ENCODE measurements at regions of chr10 and their contacts with region 1.

Region 1: DNA sequence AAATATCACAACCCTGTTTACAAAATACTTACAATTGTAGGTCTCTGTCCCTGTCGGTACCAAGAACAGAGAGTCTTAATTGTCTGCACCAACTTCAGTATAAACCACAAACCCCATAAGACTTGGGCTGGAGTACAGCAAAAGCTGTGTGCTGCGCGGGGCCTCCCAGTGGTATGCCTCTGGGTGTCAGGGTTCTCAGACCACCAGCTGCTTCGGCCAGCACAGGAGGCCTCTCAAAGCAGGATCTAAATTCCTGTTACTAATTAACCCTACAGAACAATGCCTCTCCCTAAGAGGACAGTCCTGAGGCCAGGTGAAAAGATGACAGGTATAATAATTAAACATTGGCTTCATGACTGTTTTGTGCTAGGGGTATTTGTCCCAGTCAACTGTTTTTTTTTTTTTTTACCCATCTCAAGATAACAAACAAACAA is 957 bp upstream of the SVIL start:
- DNase-seq: peak; percentile 57
- H3K4me3 ChIP-seq: no peak overlapping the region
- H3K27ac ChIP-seq: peak overlapping the region; percentile 93
- H3K4me1 ChIP-seq: peaks cover 37% of the 10 kb centered on the region
- H3K27me3 ChIP-seq: no peaks in the 10 kb centered on the region
- CTCF ChIP-seq: no peak
- POLR2A ChIP-seq: no peak

Region 2: DNA sequence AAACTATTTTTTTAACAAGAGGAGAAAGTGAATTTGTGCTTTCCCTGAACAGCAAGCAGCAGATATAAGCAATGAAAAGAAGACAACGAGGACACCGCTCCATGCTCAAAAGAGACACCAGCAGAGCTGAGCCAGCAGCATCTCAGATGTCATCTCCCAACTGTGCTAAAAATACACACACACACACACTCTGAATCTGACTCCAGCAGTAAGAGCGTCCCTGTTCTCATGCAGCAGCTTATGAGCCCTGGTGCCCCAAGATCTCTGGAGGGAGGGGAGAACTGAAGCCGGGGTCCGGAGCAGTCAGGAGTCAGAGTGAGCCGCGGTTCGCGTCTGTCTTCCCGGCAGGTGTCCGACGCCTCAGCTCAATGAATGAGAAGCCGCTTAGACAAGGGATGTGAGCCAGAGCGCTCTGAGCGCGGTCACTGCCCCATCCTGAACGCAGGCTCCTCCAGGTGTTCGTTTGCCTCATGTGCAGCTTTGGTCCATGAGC is 50.2 kb before region 1 on chr10:
- CTCF ChIA-PET with region 1: no interaction called
- POLR2A ChIA-PET with region 1: no interaction called
- dilution Hi-C with region 1: no loop called
- intact Hi-C with region 1: no loop called
- DNase-seq: peak; percentile 60
- H3K4me3 ChIP-seq: no peak overlapping the region
- H3K27ac ChIP-seq: peak overlapping the region; percentile 32
- H3K4me1 ChIP-seq: peaks cover 26% of the 10 kb centered on the region
- H3K27me3 ChIP-seq: no peaks in the 10 kb centered on the region
- CTCF ChIP-seq: no peak
- POLR2A ChIP-seq: no peak

Region 3: GRCh38 chr10:29598851-29599311 is 36.8 kb before region 1 on chr10:
- CTCF ChIA-PET with region 1: no interaction called
- POLR2A ChIA-PET with region 1: no interaction called
- dilution Hi-C with region 1: no loop called
- intact Hi-C with region 1: loop called (anchors 5 kb)
- DNase-seq: no peak
- H3K4me3 ChIP-seq: no peak overlapping the region
- H3K27ac ChIP-seq: no peak overlapping the region
- H3K4me1 ChIP-seq: no peaks in the 10 kb centered on the region
- H3K27me3 ChIP-seq: no peaks in the 10 kb centered on the region
- CTCF ChIP-seq: no peak
- POLR2A ChIP-seq: no peak